ENCODE measurements at regions of chr3 and their contacts with region 1.

Region 1: DNA sequence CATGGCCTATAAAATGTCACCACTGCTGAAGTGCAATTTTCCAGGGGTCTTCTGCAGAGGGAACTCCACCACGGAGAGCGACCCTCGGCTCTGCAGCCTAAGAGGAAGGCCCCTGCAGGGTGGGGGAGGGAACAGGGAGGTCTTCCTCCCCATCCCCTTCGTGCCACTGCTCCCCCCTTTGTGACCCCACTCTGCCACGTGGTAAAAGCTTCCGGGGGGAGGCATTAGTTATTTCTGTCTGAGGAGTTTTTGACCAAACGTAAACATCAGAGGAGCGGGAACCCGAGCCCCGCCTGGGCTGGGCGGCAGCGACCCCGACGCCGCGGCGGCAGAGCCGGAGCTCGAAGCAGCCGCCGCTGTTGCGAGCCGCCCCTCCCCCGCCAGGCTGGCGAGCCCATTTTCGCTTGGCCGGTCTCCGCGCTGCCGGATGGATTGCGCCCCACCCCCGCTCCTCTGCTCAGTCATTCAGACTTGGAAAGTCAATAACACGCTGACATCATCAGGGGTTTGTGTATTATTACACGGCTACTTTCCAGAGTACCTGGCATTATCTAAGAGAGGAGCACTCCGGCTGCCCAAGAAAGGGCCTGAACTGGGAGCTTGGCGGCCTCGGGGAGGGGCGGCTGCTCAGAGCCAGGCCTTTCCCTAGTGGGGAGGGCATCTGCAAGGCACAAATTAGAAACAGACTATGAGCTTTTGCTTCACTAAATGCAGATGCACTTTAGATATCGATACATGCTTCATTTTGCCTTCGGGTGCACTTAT is 162.5 kb upstream of the TBL1XR1 start:
- DNase-seq: peak; percentile 98
- ATAC-seq: peak; percentile 76
- H3K4me3 ChIP-seq: peak overlapping the region; percentile 35 to 77 (median 58); a peak in 5 of 6 replicates
- H3K27ac ChIP-seq: peak overlapping the region; percentile 93
- H3K4me1 ChIP-seq: peaks cover 73% of the 10 kb centered on the region
- H3K27me3 ChIP-seq: no peaks in the 10 kb centered on the region
- CTCF ChIP-seq: peak; percentile 49
- EP300 ChIP-seq: peak; percentile 98
- POLR2A ChIP-seq: peak; percentile 14 to 15; a peak in 2 of 4 replicates
- RAD21 ChIP-seq: peak; percentile 93

Region 2: GRCh38 chr3:176953106-176954060 is 406.4 kb before region 1 on chr3:
- CTCF ChIA-PET with region 1: no interaction called
- POLR2A ChIA-PET with region 1: no interaction called
- in situ Hi-C with region 1: no loop called
- intact Hi-C with region 1: no loop called
- DNase-seq: no peak
- ATAC-seq: no peak
- H3K4me3 ChIP-seq: no peak overlapping the region
- H3K27ac ChIP-seq: no peak overlapping the region
- H3K4me1 ChIP-seq: no peaks in the 10 kb centered on the region
- H3K27me3 ChIP-seq: no peaks in the 10 kb centered on the region
- CTCF ChIP-seq: no peak
- EP300 ChIP-seq: no peak
- POLR2A ChIP-seq: no peak
- RAD21 ChIP-seq: no peak

Region 3: GRCh38 chr3:177050501-177051237 is 309.1 kb before region 1 on chr3:
- CTCF ChIA-PET with region 1: no interaction called
- POLR2A ChIA-PET with region 1: no interaction called
- in situ Hi-C with region 1: loop called (anchors 5 kb)
- intact Hi-C with region 1: loop called (anchors 2 kb)
- DNase-seq: peak; percentile 13
- ATAC-seq: no peak
- H3K4me3 ChIP-seq: no peak overlapping the region
- H3K27ac ChIP-seq: no peak overlapping the region
- H3K4me1 ChIP-seq: no peaks in the 10 kb centered on the region
- H3K27me3 ChIP-seq: no peaks in the 10 kb centered on the region
- CTCF ChIP-seq: peak; percentile 38
- EP300 ChIP-seq: no peak
- POLR2A ChIP-seq: no peak
- RAD21 ChIP-seq: no peak

Region 4: DNA sequence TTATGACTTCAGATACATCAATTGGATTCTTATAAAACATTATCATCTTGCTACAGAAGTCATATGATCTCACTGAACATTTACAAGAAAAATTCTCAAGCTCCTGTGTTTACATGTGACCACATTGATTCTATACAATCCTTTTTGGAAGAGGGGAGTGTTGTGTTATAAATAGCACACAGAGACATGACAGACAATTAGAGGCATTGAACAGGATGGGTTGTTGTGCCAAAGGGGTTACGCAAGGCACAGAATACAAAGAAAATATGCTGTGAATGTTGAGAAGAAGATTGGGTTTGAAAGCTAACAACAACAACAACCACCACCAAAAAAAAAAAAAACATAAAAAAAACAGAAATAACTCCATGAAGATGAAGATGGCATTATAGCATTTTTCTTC is 130.0 kb before region 1 on chr3:
- CTCF ChIA-PET with region 1: no interaction called
- POLR2A ChIA-PET with region 1: no interaction called
- in situ Hi-C with region 1: no loop called
- intact Hi-C with region 1: no loop called
- DNase-seq: peak; percentile 29
- ATAC-seq: peak; percentile 56
- H3K4me3 ChIP-seq: no peak overlapping the region
- H3K27ac ChIP-seq: no peak overlapping the region
- H3K4me1 ChIP-seq: peaks cover 19% of the 10 kb centered on the region
- H3K27me3 ChIP-seq: no peaks in the 10 kb centered on the region
- CTCF ChIP-seq: no peak
- EP300 ChIP-seq: no peak
- POLR2A ChIP-seq: no peak
- RAD21 ChIP-seq: no peak

Region 5: DNA sequence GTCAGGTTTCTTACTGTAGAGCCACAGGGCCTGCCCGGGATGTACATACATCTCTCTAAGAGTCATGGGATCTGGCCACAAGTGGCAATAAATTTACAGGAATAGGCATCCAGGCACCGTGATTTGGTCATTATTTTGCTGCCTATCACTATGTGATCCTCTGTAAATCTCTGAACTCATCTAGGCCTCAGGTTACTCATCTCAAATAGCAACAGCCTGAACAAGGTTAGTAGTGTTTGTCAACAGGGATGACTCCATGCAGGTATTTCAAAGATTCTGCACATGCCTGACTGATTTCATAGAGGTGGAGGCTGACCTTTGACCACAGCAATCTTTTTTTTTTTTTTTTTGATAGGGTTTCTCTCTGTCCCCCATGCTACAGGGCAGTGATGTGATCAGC is 73.7 kb before region 1 on chr3:
- CTCF ChIA-PET with region 1: no interaction called
- POLR2A ChIA-PET with region 1: interaction called, 4 read pairs
- in situ Hi-C with region 1: no loop called
- intact Hi-C with region 1: loop called (anchors 1 kb)
- DNase-seq: peak; percentile 91
- ATAC-seq: peak; percentile 93
- H3K4me3 ChIP-seq: no peak overlapping the region
- H3K27ac ChIP-seq: peak overlapping the region; percentile 38
- H3K4me1 ChIP-seq: peaks cover 56% of the 10 kb centered on the region
- H3K27me3 ChIP-seq: no peaks in the 10 kb centered on the region
- CTCF ChIP-seq: no peak
- EP300 ChIP-seq: peak in 1 of 2 experiments; percentile 66; a peak in 2 of 4 replicates
- POLR2A ChIP-seq: no peak
- RAD21 ChIP-seq: no peak

Region 6: DNA sequence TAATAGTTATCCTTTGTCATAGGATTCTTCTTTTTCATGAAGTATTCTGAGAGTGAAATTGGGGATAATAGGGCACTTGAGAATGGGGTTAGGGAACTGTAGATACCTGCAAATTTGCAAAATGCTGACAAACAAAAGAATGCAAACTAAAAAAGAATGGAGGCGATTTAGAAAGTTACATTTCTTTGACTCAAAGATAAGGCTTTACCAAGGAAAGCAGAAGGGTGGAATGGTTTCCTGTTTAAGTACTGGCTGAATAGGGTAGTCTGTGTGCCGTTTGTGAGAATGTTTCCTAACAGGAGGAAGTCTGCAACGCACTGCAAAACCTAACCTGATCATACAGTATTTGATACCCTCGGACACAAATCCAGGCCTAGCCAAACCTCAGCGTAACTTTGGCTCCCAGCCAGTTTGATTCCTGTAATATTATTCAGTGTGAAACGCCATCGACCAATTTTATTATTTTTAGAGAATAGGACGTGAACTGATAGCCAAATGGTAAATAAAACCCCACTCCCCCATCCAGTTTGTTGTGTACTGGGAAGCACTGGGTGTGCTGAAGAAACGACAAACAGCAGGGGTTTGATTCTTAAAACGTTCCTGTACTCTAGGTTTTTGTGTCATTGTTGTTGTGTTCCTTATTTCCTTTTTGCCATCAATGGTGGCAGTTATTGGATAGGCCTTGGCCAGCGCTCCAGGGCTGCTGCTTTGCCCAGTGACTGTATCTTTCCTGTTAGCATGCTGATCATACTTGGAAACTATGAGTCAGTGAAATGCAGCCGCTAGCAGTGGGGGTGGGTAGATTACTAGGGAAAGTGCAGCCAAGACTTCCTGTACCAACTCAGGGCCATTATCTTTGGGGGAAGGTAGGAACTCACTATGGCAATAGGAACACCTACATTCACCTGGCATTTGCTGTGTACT is 14.5 kb before region 1 on chr3:
- CTCF ChIA-PET with region 1: no interaction called
- POLR2A ChIA-PET with region 1: interaction called, 14 read pairs
- in situ Hi-C with region 1: no loop called
- intact Hi-C with region 1: loop called (anchors 1 kb)
- DNase-seq: peak; percentile 91
- ATAC-seq: peak; percentile 97
- H3K4me3 ChIP-seq: no peak overlapping the region
- H3K27ac ChIP-seq: peak overlapping the region; percentile 41
- H3K4me1 ChIP-seq: peaks cover 45% of the 10 kb centered on the region
- H3K27me3 ChIP-seq: no peaks in the 10 kb centered on the region
- CTCF ChIP-seq: no peak
- EP300 ChIP-seq: peak; percentile 56 to 68; a peak in 3 of 4 replicates
- POLR2A ChIP-seq: 0 out of 4 replicates have a peak, but pooled peaks of 1 of the 2 experiments have one; percentile 31
- RAD21 ChIP-seq: no peak

Region 7: DNA sequence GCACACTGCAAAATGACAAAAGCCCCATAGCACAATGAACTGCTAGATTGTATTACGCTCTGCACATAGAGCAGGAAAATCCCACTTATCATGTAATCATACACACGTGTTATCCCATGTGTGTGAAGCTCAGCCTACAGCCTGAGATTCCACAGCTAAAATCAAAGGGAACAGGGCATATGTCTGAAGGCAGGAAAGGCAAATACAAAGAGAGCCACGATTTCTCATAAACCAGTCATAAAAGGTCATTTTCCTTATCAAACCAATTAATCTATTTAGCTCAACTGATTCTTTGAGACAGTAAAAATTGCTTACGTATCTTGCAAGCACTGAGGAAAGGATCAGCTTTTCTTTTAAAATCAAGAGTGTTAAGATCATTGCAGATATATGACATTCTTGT is 36.9 kb after region 1 on chr3:
- CTCF ChIA-PET with region 1: no interaction called
- POLR2A ChIA-PET with region 1: no interaction called
- in situ Hi-C with region 1: no loop called
- intact Hi-C with region 1: no loop called
- DNase-seq: no peak
- ATAC-seq: no peak
- H3K4me3 ChIP-seq: no peak overlapping the region
- H3K27ac ChIP-seq: no peak overlapping the region
- H3K4me1 ChIP-seq: peaks cover 5% of the 10 kb centered on the region; the same call in 1 of the 2 replicates
- H3K27me3 ChIP-seq: no peaks in the 10 kb centered on the region
- CTCF ChIP-seq: no peak
- EP300 ChIP-seq: no peak
- POLR2A ChIP-seq: no peak
- RAD21 ChIP-seq: no peak

Region 8: GRCh38 chr3:177777699-177778098 is 417.9 kb after region 1 on chr3:
- CTCF ChIA-PET with region 1: no interaction called
- POLR2A ChIA-PET with region 1: no interaction called
- in situ Hi-C with region 1: loop called (anchors 10 kb)
- intact Hi-C with region 1: no loop called
- DNase-seq: peak; percentile 52
- ATAC-seq: peak; percentile 97
- H3K4me3 ChIP-seq: no peak overlapping the region
- H3K27ac ChIP-seq: no peak overlapping the region
- H3K4me1 ChIP-seq: no peaks in the 10 kb centered on the region
- H3K27me3 ChIP-seq: 0 out of 5 replicates have a peak, but pooled peaks cover 0 to 2% of the 10 kb centered on the region in 2 experiments
- CTCF ChIP-seq: peak; percentile 81
- EP300 ChIP-seq: no peak
- POLR2A ChIP-seq: no peak
- RAD21 ChIP-seq: peak; percentile 68

Measured in HepG2 (cell line).